ENCODE measurements at regions of chr12 and their contacts with region 1.

Region 1: DNA sequence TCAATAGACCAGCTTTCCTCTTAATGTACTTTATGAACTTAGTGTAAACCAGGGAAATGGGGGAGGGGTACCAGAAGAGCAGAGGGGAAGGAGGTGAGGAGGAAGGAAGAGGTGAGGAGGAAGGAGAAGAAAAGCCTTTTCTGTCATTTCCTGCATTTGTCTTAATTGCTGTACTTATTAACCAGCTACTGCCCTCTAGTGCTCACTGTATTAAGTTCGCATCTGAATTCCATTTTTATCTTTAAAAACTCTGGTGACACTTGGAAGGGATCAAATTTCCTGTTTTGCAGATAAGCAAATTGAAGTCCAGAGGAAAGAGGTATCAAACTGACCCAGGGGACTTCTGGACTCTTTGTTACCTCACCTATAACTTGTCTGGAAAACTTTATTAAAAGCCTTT is 22.2 kb downstream of the MANSC1 start:
- DNase-seq: no peak
- ATAC-seq: peak; percentile 64
- H3K4me3 Mint-ChIP-seq: no peak overlapping the region
- H3K27ac Mint-ChIP-seq: peak overlapping the region; percentile 44
- H3K4me1 Mint-ChIP-seq: peaks cover 9% of the 10 kb centered on the region
- H3K27me3 Mint-ChIP-seq: no peaks in the 10 kb centered on the region

Region 2: DNA sequence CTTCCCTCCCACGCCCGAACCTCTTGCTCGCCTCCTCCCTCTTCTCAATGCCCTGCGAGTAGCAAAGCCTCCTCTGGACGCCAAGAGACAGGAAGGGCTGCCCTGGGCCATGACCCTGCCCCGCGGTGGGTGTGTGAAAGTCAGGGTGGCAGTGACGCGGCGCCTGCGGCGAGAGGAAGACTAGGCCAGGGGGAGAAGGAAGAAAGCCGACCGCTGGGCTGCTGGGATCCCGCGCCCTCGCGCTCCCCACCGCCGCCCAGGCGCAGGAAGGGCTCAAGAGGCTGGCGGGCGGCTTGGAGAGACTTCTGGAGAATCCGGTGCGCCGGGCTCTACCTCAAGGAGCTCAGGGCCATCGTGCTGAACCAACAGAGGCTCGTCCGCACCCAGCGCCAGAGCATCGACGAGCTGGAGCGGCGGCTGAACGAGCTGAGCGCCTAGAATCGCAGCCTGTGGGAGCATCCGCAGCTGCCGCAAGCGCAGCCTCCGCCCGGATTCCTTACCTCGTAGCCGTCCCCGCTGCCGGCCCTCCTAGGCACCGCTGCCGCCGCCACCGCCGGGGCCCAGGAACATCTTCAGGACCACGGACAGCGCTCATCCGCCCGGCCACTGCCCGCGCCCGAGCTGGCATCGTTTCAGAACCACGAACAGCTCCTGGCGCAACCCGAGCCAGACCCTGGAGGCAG is 827.5 kb before region 1 on chr12:
- CTCF ChIA-PET with region 1: interaction called, 4 read pairs
- POLR2A ChIA-PET with region 1: no interaction called
- intact Hi-C with region 1: loop called in 1 of 2 experiments (anchors 5 kb)
- DNase-seq: peak; percentile 92
- ATAC-seq: peak; percentile 96
- H3K4me3 Mint-ChIP-seq: no peak overlapping the region
- H3K27ac Mint-ChIP-seq: no peak overlapping the region
- H3K4me1 Mint-ChIP-seq: peaks cover 3% of the 10 kb centered on the region
- H3K27me3 Mint-ChIP-seq: peaks cover 18% of the 10 kb centered on the region

Region 3: DNA sequence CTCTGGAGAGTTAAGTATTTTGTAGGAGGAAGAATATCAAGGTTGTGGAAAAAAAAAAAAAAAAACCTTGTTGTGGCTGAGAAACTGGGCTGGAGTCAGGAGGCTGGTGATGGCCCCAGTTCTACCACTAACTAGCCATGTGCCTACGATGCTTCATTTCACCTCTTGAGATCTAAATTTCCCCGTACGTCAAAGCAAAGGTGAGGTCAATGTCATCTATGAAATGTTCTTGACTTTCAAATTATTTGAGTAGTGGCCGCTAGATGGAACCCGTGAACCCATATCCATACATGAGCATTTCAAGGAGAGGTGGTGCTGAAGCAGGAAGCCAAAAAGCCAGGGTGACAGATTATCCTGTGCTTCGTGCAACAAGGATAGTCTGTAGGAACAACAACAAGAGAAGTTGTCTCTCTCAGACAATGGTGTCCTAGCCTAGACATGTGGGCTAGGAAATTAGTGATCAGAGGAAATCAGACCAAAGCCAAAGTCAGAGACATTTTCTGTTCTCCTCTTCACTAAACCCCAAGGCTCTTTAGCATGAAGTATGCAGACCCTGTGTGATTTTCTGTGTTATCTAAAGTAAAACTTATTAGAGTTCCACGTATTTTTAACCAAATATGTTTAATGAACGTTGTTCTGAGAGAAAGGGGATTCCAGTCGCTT is 773.8 kb before region 1 on chr12:
- CTCF ChIA-PET with region 1: interaction called, 5 read pairs
- POLR2A ChIA-PET with region 1: no interaction called
- intact Hi-C with region 1: loop called (anchors 1 to 10 kb)
- DNase-seq: peak; percentile 76
- ATAC-seq: peak; percentile 79
- H3K4me3 Mint-ChIP-seq: no peak overlapping the region
- H3K27ac Mint-ChIP-seq: no peak overlapping the region
- H3K4me1 Mint-ChIP-seq: peaks cover 28% of the 10 kb centered on the region
- H3K27me3 Mint-ChIP-seq: no peaks in the 10 kb centered on the region

Region 4: DNA sequence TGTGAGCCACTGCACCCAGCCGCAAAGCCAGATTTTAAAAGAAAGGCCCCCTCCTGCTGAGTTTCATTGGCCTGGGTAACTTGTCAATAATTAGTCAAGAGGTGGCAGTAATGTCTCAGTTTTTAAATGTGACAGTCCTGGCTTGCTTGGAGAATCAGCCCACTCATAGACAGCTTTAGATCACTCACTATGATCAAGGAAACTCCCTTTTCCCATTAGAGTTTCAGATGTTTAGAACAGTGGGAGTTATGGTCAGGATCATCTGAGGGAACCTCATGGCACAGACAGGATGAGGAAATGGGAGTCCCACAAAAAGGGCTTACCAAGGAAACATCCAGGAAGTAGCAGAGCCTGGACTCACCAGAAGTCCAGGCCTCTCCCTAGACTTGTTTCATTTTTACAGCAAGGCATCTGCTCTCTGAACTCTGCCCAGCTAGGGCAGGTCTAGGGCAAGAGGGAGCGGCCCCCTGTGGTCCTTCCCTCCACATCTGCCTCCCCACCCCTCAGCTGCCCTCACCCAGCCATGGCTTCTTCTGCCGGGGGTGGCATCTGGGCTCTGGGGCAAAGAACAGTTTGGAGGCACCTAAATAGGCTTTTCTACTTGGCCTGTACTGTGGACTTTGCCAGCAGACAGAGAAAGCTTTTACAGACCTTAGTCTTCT is 245.8 kb before region 1 on chr12:
- CTCF ChIA-PET with region 1: interaction called, 43 read pairs
- POLR2A ChIA-PET with region 1: no interaction called
- intact Hi-C with region 1: loop called in 1 of 2 experiments (anchors 1 kb)
- DNase-seq: peak; percentile 11
- ATAC-seq: peak; percentile 83
- H3K4me3 Mint-ChIP-seq: no peak overlapping the region
- H3K27ac Mint-ChIP-seq: no peak overlapping the region
- H3K4me1 Mint-ChIP-seq: no peaks in the 10 kb centered on the region
- H3K27me3 Mint-ChIP-seq: no peaks in the 10 kb centered on the region

Region 5: GRCh38 chr12:12266873-12267741 is 60.7 kb before region 1 on chr12 and contains the start of gene LRP6:
- CTCF ChIA-PET with region 1: interaction called, 10 read pairs
- POLR2A ChIA-PET with region 1: no interaction called
- intact Hi-C with region 1: no loop called
- DNase-seq: peak; percentile 90
- ATAC-seq: peak; percentile 95
- H3K4me3 Mint-ChIP-seq: peak within 1 kb of the TSS; percentile 82
- H3K27ac Mint-ChIP-seq: peak within 1 kb of the TSS; percentile 79
- H3K4me1 Mint-ChIP-seq: peaks cover 24% of the 10 kb centered on the region
- H3K27me3 Mint-ChIP-seq: peaks cover 7% of the 10 kb centered on the region
- total RNA-seq, gene LRP6: 6.8 to 8.2 TPM

Region 6: DNA sequence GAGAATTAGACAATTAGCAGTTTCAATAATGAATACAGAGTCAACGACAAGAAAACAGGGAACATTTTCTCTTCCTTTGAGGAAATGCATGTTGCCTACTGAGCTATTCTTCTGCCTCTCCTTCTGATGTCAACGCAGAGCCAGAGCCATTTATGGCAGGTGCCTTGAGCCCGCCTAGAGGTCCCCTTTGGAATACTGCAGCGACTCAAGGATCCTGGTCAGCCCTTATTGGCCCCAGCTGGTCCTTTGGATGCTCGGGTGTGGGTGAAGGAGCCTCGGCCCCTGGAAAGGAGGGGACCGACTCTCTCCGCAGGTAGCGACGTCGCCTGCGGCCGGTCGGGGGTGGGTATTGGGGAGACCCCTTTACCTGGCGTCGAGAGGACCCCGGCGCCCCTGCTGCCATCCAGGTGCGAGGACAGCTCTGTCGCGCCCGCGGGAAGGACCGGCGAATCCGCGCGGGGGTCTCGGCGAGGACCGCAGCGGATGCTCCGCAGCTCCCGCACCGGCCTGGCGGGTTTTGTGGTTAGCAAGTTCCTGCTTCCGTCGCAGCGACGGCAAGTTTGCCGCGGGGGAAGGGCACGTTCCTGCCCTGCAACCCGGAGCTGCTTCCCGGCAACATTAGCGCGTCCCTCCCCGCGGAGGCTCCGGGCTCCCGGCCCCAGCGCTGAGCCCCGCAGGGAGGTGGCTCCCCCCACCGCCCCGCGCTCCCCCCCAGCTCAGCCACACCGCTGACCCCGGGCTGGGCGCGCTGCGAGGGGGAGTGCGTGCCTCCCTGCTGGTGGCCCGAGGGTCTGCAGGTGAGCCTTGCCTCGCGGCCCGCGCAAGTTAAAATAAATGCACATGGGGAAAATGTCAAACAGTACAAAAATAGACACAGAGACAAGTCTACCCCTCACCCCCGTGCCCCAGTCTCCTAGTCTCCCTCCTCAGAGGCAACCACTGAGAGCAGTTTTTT is 22.2 kb after region 1 on chr12 and contains the start of gene MANSC1:
- CTCF ChIA-PET with region 1: interaction called, 10 read pairs
- POLR2A ChIA-PET with region 1: no interaction called
- intact Hi-C with region 1: no loop called
- DNase-seq: peak; percentile 76
- ATAC-seq: peak; percentile 77
- H3K4me3 Mint-ChIP-seq: peak within 1 kb of the TSS; percentile 62
- H3K27ac Mint-ChIP-seq: peak within 1 kb of the TSS; percentile 45
- H3K4me1 Mint-ChIP-seq: peaks cover 26% of the 10 kb centered on the region
- H3K27me3 Mint-ChIP-seq: no peaks in the 10 kb centered on the region
- total RNA-seq, gene MANSC1: 2.2 to 2.5 TPM

Measured in activated CD4-positive, alpha-beta T cell treated with anti-CD3 and anti-CD28 coated beads for 36 hours (primary cell).